Caco-2 (cell line): ENCODE measurements at regions of chr10 and their contacts with region 1.

Region 1: GRCh38 chr10:14705548-14706230 is 69.0 kb downstream of the FAM107B start:
- DNase-seq: peak in 1 of 2 experiments; percentile 68
- H3K4me3 ChIP-seq: no peak overlapping the region
- H3K4me3 Mint-ChIP-seq: no peak overlapping the region
- H3K27ac Mint-ChIP-seq: peak overlapping the region; percentile 3
- H3K4me1 ChIP-seq: peaks cover 53% of the 10 kb centered on the region
- H3K4me1 Mint-ChIP-seq: peaks cover 37% of the 10 kb centered on the region
- H3K27me3 ChIP-seq: no peaks in the 10 kb centered on the region
- H3K27me3 Mint-ChIP-seq: no peaks in the 10 kb centered on the region
- CTCF ChIP-seq: no peak

Region 2: DNA sequence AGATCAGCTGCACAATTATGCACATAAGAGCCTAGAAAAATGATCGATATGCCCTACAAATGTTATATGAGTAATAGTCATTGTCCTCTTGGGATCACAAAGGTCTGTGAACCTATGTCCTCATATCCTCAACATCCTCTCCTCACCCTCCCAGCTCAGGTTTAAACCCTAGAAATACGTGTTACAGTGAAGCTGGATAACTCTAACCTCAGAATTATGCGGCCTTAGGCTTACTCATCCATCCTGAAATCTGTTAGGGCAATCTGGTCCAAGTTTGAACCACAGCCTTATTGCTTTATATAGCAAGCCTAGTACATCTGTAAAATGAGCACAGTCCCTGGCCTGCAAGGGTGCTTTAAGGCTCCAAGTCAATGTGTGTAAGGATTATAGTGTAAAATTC is 290.8 kb before region 1 on chr10:
- CTCF ChIA-PET with region 1: no interaction called
- POLR2A ChIA-PET with region 1: no interaction called
- intact Hi-C with region 1: no loop called
- DNase-seq: no peak
- H3K4me3 ChIP-seq: no peak overlapping the region
- H3K4me3 Mint-ChIP-seq: no peak overlapping the region
- H3K27ac Mint-ChIP-seq: no peak overlapping the region
- H3K4me1 ChIP-seq: peaks cover 47% of the 10 kb centered on the region
- H3K4me1 Mint-ChIP-seq: peaks cover 39% of the 10 kb centered on the region
- H3K27me3 ChIP-seq: no peaks in the 10 kb centered on the region
- H3K27me3 Mint-ChIP-seq: no peaks in the 10 kb centered on the region
- CTCF ChIP-seq: no peak

Region 3: DNA sequence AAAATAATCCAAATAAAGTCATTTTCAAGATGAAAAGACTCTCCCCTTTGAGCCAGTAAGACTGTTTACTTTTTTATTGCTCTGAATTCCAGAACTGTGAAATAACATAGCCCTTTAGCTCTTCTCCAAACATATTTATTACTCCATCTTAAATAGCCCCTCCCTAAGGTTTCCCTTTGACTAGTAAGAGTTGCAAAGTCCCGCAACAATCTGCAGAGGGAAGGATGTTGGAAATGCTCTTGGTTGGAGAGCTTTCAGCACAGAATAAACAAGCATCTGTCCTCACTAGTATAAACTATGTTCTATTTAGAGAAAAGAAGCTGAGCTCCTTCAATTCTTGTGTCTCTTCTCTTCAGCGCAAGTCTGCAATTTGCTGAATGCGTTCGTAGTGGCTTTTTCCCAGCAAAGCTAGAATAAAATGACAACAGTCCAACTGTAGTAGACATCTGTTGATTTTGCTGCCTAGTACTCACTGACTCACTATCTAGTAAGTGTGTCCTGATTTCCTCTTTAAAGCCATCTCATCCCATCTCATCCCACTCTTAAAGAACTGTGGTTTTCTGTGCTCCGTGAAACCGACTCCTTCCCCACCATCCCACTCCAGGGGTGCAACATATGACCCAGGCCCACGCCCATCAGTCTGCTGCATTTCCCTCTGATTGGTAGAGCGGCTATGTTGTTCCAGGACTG is 35.0 kb before region 1 on chr10:
- CTCF ChIA-PET with region 1: interaction called, 3 read pairs
- POLR2A ChIA-PET with region 1: no interaction called
- intact Hi-C with region 1: loop called (anchors 1 kb)
- DNase-seq: peak in 1 of 2 experiments; percentile 60
- H3K4me3 ChIP-seq: no peak overlapping the region
- H3K4me3 Mint-ChIP-seq: peak overlapping the region; percentile 61
- H3K27ac Mint-ChIP-seq: peak overlapping the region; percentile 71
- H3K4me1 ChIP-seq: peaks cover 54% of the 10 kb centered on the region
- H3K4me1 Mint-ChIP-seq: peaks cover 43% of the 10 kb centered on the region
- H3K27me3 ChIP-seq: no peaks in the 10 kb centered on the region
- H3K27me3 Mint-ChIP-seq: no peaks in the 10 kb centered on the region
- CTCF ChIP-seq: no peak

Region 4: DNA sequence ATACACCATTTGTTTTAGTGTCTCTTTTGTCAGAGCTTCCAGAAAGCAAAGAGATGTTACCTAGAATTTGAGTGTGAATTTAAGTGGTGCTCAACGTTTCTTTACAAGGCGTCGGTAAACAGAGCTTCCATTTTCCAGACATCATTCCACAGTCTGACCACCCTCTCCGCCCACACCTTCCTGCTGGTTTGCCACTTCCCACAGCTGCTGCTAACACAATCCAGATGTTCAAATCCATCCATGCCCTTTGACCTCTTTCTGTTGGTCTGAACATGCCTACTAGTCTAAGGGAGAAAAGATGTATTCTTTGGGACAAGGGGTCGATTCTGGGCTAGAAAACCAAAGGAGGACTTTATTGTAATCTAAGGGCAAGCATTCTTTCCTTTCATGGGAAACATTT is 17.1 kb before region 1 on chr10:
- CTCF ChIA-PET with region 1: no interaction called
- POLR2A ChIA-PET with region 1: no interaction called
- intact Hi-C with region 1: loop called (anchors 1 kb)
- DNase-seq: no peak
- H3K4me3 ChIP-seq: no peak overlapping the region
- H3K4me3 Mint-ChIP-seq: no peak overlapping the region
- H3K27ac Mint-ChIP-seq: peak overlapping the region; percentile 17
- H3K4me1 ChIP-seq: peaks cover 33% of the 10 kb centered on the region
- H3K4me1 Mint-ChIP-seq: peaks cover 33% of the 10 kb centered on the region
- H3K27me3 ChIP-seq: no peaks in the 10 kb centered on the region
- H3K27me3 Mint-ChIP-seq: no peaks in the 10 kb centered on the region
- CTCF ChIP-seq: no peak

Region 5: GRCh38 chr10:14737808-14738545 is 32.3 kb after region 1 on chr10:
- CTCF ChIA-PET with region 1: interaction called, 3 read pairs
- POLR2A ChIA-PET with region 1: interaction called, 5 read pairs
- intact Hi-C with region 1: loop called (anchors 1 kb)
- DNase-seq: peak; percentile 81 to 86
- H3K4me3 ChIP-seq: no peak overlapping the region
- H3K4me3 Mint-ChIP-seq: peak overlapping the region; percentile 1
- H3K27ac Mint-ChIP-seq: peak overlapping the region; percentile 27
- H3K4me1 ChIP-seq: peaks cover 56% of the 10 kb centered on the region
- H3K4me1 Mint-ChIP-seq: peaks cover 36% of the 10 kb centered on the region
- H3K27me3 ChIP-seq: no peaks in the 10 kb centered on the region
- H3K27me3 Mint-ChIP-seq: no peaks in the 10 kb centered on the region
- CTCF ChIP-seq: no peak

Region 6: GRCh38 chr10:14782691-14783363 is 77.1 kb after region 1 on chr10:
- CTCF ChIA-PET with region 1: no interaction called
- POLR2A ChIA-PET with region 1: no interaction called
- intact Hi-C with region 1: loop called (anchors 2 kb)
- DNase-seq: peak; percentile 91 to 96
- H3K4me3 ChIP-seq: no peak overlapping the region
- H3K4me3 Mint-ChIP-seq: peak overlapping the region; percentile 49
- H3K27ac Mint-ChIP-seq: peak overlapping the region; percentile 90
- H3K4me1 ChIP-seq: peaks cover 37% of the 10 kb centered on the region
- H3K4me1 Mint-ChIP-seq: peaks cover 35% of the 10 kb centered on the region
- H3K27me3 ChIP-seq: no peaks in the 10 kb centered on the region
- H3K27me3 Mint-ChIP-seq: no peaks in the 10 kb centered on the region
- CTCF ChIP-seq: no peak

Region 7: DNA sequence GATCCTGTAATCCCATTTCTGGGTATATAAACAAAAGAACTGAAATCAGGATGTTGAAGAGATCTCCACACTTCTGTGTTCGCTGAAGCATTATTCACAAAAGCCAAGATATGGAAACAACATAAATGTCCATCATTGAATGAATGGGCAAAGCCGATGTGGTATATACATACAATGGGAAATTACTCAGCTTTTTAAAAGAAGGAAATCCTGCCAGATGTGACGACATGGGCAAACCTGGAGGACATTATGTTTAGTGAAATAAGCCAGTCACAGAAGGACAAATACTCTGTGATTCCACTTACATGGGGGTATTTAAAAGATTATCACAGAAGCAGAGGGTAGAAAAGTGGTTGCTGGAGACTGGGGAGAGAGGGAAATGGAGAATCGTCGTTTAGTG is 92.9 kb after region 1 on chr10:
- CTCF ChIA-PET with region 1: no interaction called
- POLR2A ChIA-PET with region 1: no interaction called
- intact Hi-C with region 1: no loop called
- DNase-seq: no peak
- H3K4me3 ChIP-seq: no peak overlapping the region
- H3K4me3 Mint-ChIP-seq: no peak overlapping the region
- H3K27ac Mint-ChIP-seq: no peak overlapping the region
- H3K4me1 ChIP-seq: peaks cover 8% of the 10 kb centered on the region; the same call in 1 of the 2 replicates
- H3K4me1 Mint-ChIP-seq: peaks cover 9% of the 10 kb centered on the region
- H3K27me3 ChIP-seq: no peaks in the 10 kb centered on the region
- H3K27me3 Mint-ChIP-seq: no peaks in the 10 kb centered on the region
- CTCF ChIP-seq: no peak